Testis (tissue), 5 donors: ENCODE measurements at regions of chr16 and their contacts with region 1.

Region 1: GRCh38 chr16:21158208-21159110 is at the start of gene LDAF1:
- DNase-seq: peak; percentile 91
- H3K4me3 ChIP-seq: peak within 1 kb of the TSS; percentile 85 to 90
- H3K27ac ChIP-seq: peak within 1 kb of the TSS; percentile 77 to 80
- H3K4me1 ChIP-seq: peaks cover 29% of the 10 kb centered on the region
- H3K27me3 ChIP-seq: no peaks in the 10 kb centered on the region
- CTCF ChIP-seq: no peak
- POLR2A ChIP-seq: no peak
- total RNA-seq, gene LDAF1: 54.2 to 131 TPM

Region 2: GRCh38 chr16:20866145-20866772 is 292.2 kb before region 1 on chr16:
- intact Hi-C with region 1: no loop called
- DNase-seq: no peak
- H3K4me3 ChIP-seq: no peak overlapping the region
- H3K27ac ChIP-seq: peak overlapping the region in 1 of 2 donors; percentile 26
- H3K4me1 ChIP-seq: peaks cover 37% of the 10 kb centered on the region
- H3K27me3 ChIP-seq: no peaks in the 10 kb centered on the region
- CTCF ChIP-seq: no peak
- POLR2A ChIP-seq: no peak

Region 3: DNA sequence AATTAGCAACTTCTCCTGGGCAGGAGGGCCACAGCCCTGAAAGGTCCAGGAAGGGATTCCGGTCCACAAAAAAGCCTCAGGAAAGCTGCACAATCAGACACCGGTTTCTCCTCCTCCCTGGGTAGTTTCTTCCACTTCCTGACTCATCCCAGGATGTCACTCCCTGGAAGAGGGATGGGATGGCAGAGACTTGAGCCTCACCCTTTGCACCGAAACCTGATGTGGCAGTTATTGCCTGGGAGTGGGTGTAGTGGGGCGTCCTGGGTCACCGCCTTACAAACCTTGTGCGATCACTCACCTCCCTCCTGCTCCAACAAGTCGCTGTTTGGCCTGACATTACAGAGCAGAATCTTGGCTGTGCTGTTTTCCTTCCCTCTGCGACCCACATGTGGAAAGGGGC is 187.1 kb before region 1 on chr16:
- intact Hi-C with region 1: no loop called
- DNase-seq: no peak
- H3K4me3 ChIP-seq: no peak overlapping the region
- H3K27ac ChIP-seq: no peak overlapping the region
- H3K4me1 ChIP-seq: no peaks in the 10 kb centered on the region
- H3K27me3 ChIP-seq: no peaks in the 10 kb centered on the region
- CTCF ChIP-seq: no peak
- POLR2A ChIP-seq: no peak

Region 4: GRCh38 chr16:21300309-21301167 is 142.1 kb after region 1 on chr16:
- intact Hi-C with region 1: loop called (anchors 10 kb)
- DNase-seq: peak; percentile 98
- H3K4me3 ChIP-seq: peak overlapping the region; percentile 50 to 62
- H3K27ac ChIP-seq: peak overlapping the region in 1 of 2 donors; percentile 22
- H3K4me1 ChIP-seq: peaks cover 4% of the 10 kb centered on the region
- H3K27me3 ChIP-seq: no peaks in the 10 kb centered on the region
- CTCF ChIP-seq: peak; percentile 75 to 92 (median 80)
- POLR2A ChIP-seq: no peak

Region 5: GRCh38 chr16:21554795-21555585 is 396.5 kb after region 1 on chr16:
- intact Hi-C with region 1: loop called (anchors 10 kb)
- DNase-seq: peak; percentile 91
- H3K4me3 ChIP-seq: peak overlapping the region in 1 of 2 donors; percentile 21
- H3K27ac ChIP-seq: no peak overlapping the region
- H3K4me1 ChIP-seq: peaks cover 7% of the 10 kb centered on the region
- H3K27me3 ChIP-seq: no peaks in the 10 kb centered on the region
- CTCF ChIP-seq: peak; percentile 88 to 99 (median 99)
- POLR2A ChIP-seq: no peak